ENCODE measurements at regions of chr11 and their contacts with region 1.

Region 1: DNA sequence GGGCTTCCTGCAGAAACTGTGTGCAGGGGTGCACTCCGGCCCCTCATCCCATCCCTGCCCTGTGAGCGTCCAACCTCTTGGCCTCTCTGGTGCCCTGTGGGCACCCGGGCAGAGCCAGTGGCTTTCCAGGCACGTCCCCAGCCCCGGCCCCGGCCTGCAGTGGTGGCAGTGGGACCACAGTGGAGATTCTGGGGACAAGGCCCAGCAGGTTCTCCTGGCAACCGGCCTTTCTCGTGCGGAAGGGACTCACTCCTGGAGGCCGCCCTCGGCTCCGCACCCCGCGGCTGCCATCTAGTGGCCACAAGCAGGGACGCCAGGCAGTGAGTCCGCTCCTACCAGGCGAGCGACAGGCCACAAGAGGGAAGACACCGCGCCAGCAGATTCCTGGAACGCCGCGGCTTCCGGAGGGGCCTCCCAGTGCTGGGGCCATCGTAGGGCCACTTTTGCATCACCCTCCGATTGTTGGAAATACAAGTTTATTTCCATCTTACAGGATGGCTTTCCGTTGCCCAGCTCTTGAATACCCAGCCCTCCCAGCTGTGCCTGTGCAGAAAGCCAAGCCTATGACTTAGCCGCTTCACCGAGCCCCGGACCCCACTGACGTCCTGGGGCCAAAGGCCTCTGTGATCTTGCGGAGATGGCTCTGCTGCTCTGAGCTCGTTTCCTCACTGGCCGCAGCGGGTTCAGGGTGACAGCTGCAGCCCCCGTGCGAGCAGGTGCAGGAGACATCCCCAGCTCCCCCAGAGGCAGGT is 357.3 kb downstream of the CTTN start:
- DNase-seq: peak; percentile 8 to 66 (median 47)
- ATAC-seq: no peak
- H3K4me3 ChIP-seq: no peak overlapping the region
- H3K4me3 Mint-ChIP-seq: no peak overlapping the region
- H3K27ac ChIP-seq: no peak overlapping the region
- H3K27ac Mint-ChIP-seq: no peak overlapping the region
- H3K4me1 ChIP-seq: no peaks in the 10 kb centered on the region
- H3K4me1 Mint-ChIP-seq: no peaks in the 10 kb centered on the region
- H3K27me3 ChIP-seq: peaks cover 0 to 3% of the 10 kb centered on the region in 2 experiments
- H3K27me3 Mint-ChIP-seq: peaks cover 21% of the 10 kb centered on the region
- CTCF ChIP-seq: peak; percentile 74

Region 2: GRCh38 chr11:70467201-70468085 is 288.1 kb before region 1 on chr11:
- CTCF ChIA-PET with region 1: no interaction called
- POLR2A ChIA-PET with region 1: no interaction called
- intact Hi-C with region 1: loop called in 1 of 2 experiments (anchors 10 kb)
- DNase-seq: peak in 3 of 9 experiments; percentile 8 to 27 (median 22)
- ATAC-seq: no peak
- H3K4me3 ChIP-seq: no peak overlapping the region
- H3K4me3 Mint-ChIP-seq: no peak overlapping the region
- H3K27ac ChIP-seq: no peak overlapping the region
- H3K27ac Mint-ChIP-seq: no peak overlapping the region
- H3K4me1 ChIP-seq: no peaks in the 10 kb centered on the region
- H3K4me1 Mint-ChIP-seq: no peaks in the 10 kb centered on the region
- H3K27me3 ChIP-seq: no peaks in the 10 kb centered on the region
- H3K27me3 Mint-ChIP-seq: peaks cover 9% of the 10 kb centered on the region
- CTCF ChIP-seq: peak; percentile 56

Region 3: DNA sequence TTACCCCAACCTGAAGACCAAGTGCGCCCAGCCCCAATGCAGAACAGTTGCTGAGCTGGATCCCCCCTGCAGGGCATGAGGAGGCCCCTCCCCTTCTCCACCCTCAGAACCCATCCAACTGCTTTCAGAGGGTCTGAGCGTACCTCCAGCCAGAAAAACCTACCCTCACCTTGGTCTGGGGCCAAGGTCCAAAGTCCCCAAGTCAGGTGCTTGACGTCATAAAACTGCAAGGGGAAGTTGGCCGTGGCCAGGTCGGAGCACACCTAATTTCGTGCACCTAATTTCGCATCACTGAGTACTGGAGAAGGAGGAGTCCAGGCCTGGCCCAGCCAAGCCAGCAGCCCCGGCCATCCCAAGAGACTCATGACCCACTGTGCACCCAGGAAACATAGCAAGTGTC is 67.4 kb before region 1 on chr11:
- CTCF ChIA-PET with region 1: no interaction called
- POLR2A ChIA-PET with region 1: no interaction called
- intact Hi-C with region 1: no loop called
- DNase-seq: no peak
- ATAC-seq: no peak
- H3K4me3 ChIP-seq: no peak overlapping the region
- H3K4me3 Mint-ChIP-seq: no peak overlapping the region
- H3K27ac ChIP-seq: no peak overlapping the region
- H3K27ac Mint-ChIP-seq: no peak overlapping the region
- H3K4me1 ChIP-seq: no peaks in the 10 kb centered on the region
- H3K4me1 Mint-ChIP-seq: no peaks in the 10 kb centered on the region
- H3K27me3 ChIP-seq: no peaks in the 10 kb centered on the region
- H3K27me3 Mint-ChIP-seq: peaks cover 8% of the 10 kb centered on the region
- CTCF ChIP-seq: no peak

Region 4: DNA sequence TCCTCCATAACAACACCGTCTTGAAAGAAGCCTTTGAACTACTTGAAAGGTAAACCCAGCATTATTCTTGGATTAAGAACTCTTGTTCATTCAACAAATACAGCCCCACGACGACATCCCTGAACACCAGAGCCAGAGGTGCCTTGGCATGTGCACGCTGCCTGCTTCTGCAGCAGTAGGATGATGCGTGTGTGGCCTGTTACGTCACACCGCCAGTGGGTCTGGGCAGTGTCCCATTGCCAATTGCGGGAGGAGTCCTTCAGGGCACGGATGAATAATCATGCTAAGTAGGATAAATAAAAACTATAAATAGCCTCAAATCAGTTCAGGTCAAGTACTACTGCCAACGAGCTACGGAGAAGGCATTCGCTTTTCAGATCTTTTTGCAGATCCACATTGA is 116.3 kb after region 1 on chr11:
- CTCF ChIA-PET with region 1: no interaction called
- POLR2A ChIA-PET with region 1: no interaction called
- intact Hi-C with region 1: no loop called
- DNase-seq: no peak
- ATAC-seq: no peak
- H3K4me3 ChIP-seq: no peak overlapping the region
- H3K4me3 Mint-ChIP-seq: no peak overlapping the region
- H3K27ac ChIP-seq: no peak overlapping the region
- H3K27ac Mint-ChIP-seq: no peak overlapping the region
- H3K4me1 ChIP-seq: no peaks in the 10 kb centered on the region
- H3K4me1 Mint-ChIP-seq: no peaks in the 10 kb centered on the region
- H3K27me3 ChIP-seq: no peaks in the 10 kb centered on the region
- H3K27me3 Mint-ChIP-seq: peaks cover 4% of the 10 kb centered on the region
- CTCF ChIP-seq: no peak

Measured in CD8-positive, alpha-beta T cell (primary cell).